Heart left ventricle (tissue), 16 donors: ENCODE measurements at regions of chr20 and their contacts with region 1.

Region 1: GRCh38 chr20:39480276-39481043 is 518.3 kb downstream of the DHX35 start:
- DNase-seq: no peak
- ATAC-seq: no peak
- H3K4me3 ChIP-seq: no peak overlapping the region
- H3K27ac ChIP-seq: no peak overlapping the region
- H3K4me1 ChIP-seq: no peaks in the 10 kb centered on the region
- H3K27me3 ChIP-seq: peaks cover 0 to 4% (median 0%) of the 10 kb centered on the region in 9 donors
- CTCF ChIP-seq: no peak
- POLR2A ChIP-seq: no peak

Region 2: GRCh38 chr20:39458452-39458851 is 22.0 kb before region 1 on chr20:
- intact Hi-C with region 1: loop called in 1 of 10 experiments (anchors 1 kb)
- DNase-seq: no peak
- ATAC-seq: no peak
- H3K4me3 ChIP-seq: no peak overlapping the region
- H3K27ac ChIP-seq: no peak overlapping the region
- H3K4me1 ChIP-seq: no peaks in the 10 kb centered on the region
- H3K27me3 ChIP-seq: no peaks in the 10 kb centered on the region
- CTCF ChIP-seq: no peak
- POLR2A ChIP-seq: no peak

Region 3: GRCh38 chr20:39516964-39517363 is 36.5 kb after region 1 on chr20:
- intact Hi-C with region 1: loop called in 1 of 10 experiments (anchors 2 kb)
- DNase-seq: no peak
- ATAC-seq: no peak
- H3K4me3 ChIP-seq: no peak overlapping the region
- H3K27ac ChIP-seq: no peak overlapping the region
- H3K4me1 ChIP-seq: no peaks in the 10 kb centered on the region
- H3K27me3 ChIP-seq: no peaks in the 10 kb centered on the region
- CTCF ChIP-seq: no peak
- POLR2A ChIP-seq: no peak